Right ventricle myocardium inferior (tissue), 1 donor: ENCODE measurements at regions of chr2 and their contacts with region 1.

Region 1: GRCh38 chr2:24827321-24828237 is 34.4 kb downstream of the CENPO start:
- DNase-seq: no peak
- ATAC-seq: peak; percentile 89

Region 2: DNA sequence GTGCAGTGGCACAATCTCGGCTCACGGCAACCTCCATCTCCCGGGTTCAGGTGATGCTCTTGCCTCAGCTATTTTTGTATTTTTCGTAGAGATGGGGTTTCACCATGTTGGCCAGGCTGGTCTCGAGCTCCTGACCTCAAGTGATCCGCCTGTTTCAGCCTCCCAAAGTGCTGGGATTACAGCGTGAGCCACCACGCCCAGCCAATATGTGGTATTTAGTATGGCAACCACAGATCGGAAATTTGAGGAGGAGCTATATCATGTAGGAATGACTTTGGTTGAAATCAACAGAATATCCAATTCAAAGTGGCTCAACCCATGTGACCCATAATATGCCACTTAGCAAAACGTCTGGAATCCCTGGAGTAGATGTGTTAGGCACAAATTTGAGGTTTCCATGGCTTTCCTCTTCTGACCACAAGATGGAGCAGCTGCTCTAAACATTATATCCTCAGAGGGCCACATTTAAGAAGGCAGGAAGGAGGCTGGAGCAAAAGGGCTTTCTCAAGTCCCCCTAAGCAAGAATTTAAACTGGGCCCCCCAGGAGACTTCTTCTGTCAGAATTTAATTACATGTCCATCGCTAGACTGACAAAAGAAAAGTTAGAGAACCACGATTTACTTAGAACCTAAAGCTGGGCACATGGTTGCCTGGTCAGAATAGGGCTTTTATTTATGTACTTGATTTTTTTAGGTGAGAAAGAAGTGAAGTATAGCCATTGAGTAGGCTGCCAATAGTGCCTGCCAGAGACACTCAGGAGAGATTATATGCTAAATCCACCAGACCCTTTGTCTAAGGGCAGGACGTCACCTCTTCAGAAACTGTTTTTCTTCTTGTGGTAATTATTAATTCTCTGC is 417.7 kb before region 1 on chr2:
- intact Hi-C with region 1: loop called (anchors 1 kb)
- DNase-seq: no peak
- ATAC-seq: peak; percentile 84

Region 3: DNA sequence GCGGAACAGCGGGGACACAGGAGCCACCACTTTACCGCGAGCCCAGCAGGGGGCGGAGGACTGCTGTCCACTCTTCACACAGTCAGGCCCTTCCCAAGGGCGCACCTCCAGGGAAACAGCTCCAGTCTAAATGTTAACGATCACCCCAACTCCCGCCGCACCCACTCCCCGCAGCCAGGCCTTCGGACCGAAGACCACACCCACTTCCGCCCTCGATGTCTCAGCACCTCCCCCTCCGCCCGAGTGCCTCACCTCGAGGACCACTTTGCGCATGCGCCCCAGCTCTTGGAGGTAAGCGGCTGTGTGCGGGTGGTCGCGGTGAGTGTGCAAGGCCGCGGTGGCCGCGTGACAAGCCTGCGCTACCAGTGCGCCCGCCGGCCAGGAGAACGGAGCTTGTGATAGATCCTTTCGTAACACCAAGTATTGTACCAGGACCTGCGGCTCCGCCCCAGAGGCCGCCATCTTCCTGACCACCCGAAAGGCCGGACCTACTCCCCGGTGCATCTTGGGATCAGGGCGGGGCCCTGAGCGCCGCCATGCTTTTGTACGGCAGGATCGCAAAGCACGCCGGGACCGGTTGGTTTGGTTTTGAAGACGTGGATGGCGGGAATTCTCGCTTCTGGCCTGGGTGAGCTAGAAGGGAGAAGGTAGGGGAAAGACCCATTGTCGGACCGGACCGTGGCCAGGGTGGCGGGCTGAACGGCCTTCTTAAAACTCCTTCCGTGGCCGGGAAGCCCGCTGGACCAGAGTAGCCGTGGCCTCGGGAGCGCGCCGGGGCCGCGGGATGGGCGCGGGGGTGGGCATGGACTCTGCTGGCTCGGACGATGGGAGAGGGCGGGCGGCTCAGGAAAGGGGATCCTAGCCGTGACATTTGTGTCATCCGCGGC is 34.5 kb before region 1 on chr2 and contains the starts of genes CENPO and PTRHD1:
- intact Hi-C with region 1: loop called (anchors 5 kb)
- DNase-seq: peak; percentile 99
- ATAC-seq: peak; percentile 99
- total RNA-seq, gene CENPO: 3.0 TPM
- total RNA-seq, gene PTRHD1: 33.4 TPM

Region 4: DNA sequence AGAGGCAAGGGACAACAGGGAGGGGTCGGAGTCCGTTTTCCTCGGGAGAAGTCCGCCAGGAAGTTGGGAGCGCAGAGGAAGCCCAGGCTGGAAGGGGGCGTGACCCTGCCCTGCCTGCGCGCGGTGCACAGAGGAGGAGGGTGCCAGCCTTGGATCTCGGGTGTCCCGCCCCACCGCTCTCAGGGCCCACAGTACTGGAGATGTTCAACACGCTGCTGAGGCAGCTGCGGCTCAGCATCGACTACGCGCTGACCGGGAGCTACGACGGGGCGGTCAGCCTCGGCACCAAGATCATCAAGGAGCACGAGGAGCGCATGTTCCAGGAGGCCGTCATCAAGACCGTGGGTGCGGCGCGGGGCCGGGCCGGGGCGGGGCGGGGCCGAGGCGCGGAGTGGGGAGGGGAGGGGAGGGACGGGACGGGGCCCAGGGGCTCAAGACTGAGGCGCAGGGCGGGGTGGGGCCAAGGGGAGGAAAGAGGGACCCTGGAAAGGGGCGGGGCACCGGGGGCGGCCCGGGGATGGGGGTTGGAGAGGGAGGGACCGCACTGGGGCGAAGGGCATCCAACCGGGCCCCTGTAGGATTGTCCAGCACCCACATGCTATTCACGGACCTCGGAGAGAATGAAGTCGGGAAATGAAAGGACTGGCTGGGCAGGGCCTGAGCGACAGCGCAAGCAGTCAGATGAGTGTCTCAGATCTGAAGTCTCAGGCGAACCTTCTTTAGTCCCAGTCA is 304.2 kb after region 1 on chr2:
- intact Hi-C with region 1: loop called (anchors 10 kb)
- DNase-seq: no peak
- ATAC-seq: peak; percentile 37